Gastrocnemius medialis (tissue), 4 donors: ENCODE measurements at regions of chr19 and their contacts with region 1.

Region 1: DNA sequence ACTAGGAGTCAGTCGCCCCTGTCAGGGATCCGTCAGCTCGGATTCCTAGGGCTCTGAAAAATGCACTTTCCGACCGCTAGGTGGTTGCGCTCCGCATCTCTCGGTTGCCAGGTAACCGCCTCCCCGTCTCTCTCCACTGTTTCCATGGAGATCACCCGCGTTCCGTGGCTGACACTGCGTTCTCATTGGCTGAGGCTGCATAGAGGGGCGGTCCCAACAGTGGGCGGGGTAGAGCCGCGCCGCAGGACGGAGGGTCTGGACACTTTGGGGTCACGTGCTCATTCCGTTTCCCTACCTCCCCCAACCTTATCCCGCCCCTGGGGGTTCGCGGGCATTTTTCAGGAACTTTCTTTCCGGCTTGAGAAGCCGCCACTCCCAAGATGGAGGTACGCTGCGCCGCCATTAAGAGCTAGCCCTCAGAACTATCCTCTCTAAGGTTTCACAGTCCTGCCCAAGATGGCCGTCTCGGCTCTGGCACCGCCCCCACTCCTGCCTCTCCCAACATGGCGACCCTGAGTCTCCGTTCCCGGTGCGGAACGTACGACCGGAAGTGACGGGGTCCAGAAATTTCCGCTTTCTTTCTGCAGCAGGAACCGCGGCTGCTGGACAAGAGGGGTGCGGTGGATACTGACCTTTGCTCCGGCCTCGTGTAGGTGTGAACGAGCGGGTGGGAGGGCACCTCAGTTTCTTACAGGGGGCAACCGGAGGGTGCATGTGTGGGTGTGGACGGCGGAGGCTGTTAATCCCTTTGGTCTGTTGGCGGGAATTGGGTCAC is at the starts of genes ODAD3 and PRKCSH:
- DNase-seq: peak; percentile 97 to 98
- ATAC-seq: peak; percentile 97 to 99
- H3K4me3 ChIP-seq: peak within 1 kb of the TSS; percentile 71 to 85 (median 78)
- H3K27ac ChIP-seq: peak within 1 kb of the TSS; percentile 65 to 85 (median 76)
- H3K4me1 ChIP-seq: peaks cover 14% of the 10 kb centered on the region in 2 donors
- H3K27me3 ChIP-seq: no peaks in the 10 kb centered on the region
- CTCF ChIP-seq: peak; percentile 82 to 97 (median 93)
- POLR2A ChIP-seq: peak in 1 of 2 donors; percentile 8
- total RNA-seq, gene ODAD3: not detected
- total RNA-seq, gene PRKCSH: 31.6 to 54.2 (median 50.6) TPM

Region 2: DNA sequence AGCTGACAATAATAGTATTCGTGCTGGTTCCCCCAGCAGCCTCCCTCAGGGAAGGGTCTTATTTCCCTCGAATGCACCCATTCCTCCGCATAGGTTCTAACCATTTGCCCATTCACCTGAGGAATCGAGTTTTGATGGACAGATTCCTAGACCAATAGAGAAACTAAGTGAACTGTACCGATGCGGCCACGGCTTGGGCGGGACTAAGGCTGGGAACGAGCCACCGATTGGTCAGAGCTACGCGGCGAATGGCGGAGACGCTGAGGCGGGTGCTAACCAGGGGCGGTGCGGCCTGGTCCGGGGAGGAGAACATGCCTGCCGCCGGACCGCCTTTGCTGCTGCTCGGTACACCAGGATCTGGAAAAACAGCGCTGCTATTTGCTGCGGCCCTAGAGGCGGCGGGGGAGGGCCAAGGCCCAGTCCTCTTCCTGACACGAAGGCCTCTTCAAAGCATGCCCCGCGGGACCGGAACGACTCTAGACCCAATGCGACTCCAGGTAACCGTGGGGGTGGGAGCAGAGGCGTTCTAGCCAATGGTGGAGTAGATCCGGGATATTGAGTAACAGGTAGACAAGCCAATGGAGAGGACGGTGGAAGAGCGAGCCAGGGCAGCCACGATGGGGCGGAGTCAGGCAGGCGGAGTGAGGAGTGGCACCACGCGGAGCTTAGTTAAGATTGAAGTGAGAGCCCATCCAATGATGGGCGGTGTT is 60.7 kb before region 1 on chr19 and contains the start of gene SWSAP1:
- in situ Hi-C with region 1: loop called in 1 of 4 experiments (anchors 5 kb)
- intact Hi-C with region 1: no loop called
- DNase-seq: peak; percentile 99
- ATAC-seq: peak; percentile 97 to 98
- H3K4me3 ChIP-seq: peak within 1 kb of the TSS; percentile 73 to 84 (median 76)
- H3K27ac ChIP-seq: peak within 1 kb of the TSS; percentile 93 to 97 (median 94)
- H3K4me1 ChIP-seq: peaks cover 22 to 24% of the 10 kb centered on the region in 2 donors
- H3K27me3 ChIP-seq: no peaks in the 10 kb centered on the region
- CTCF ChIP-seq: no peak
- POLR2A ChIP-seq: peak in 1 of 2 donors; percentile 47
- total RNA-seq, gene SWSAP1: 0.51 to 1.7 (median 1.2) TPM

Region 3: DNA sequence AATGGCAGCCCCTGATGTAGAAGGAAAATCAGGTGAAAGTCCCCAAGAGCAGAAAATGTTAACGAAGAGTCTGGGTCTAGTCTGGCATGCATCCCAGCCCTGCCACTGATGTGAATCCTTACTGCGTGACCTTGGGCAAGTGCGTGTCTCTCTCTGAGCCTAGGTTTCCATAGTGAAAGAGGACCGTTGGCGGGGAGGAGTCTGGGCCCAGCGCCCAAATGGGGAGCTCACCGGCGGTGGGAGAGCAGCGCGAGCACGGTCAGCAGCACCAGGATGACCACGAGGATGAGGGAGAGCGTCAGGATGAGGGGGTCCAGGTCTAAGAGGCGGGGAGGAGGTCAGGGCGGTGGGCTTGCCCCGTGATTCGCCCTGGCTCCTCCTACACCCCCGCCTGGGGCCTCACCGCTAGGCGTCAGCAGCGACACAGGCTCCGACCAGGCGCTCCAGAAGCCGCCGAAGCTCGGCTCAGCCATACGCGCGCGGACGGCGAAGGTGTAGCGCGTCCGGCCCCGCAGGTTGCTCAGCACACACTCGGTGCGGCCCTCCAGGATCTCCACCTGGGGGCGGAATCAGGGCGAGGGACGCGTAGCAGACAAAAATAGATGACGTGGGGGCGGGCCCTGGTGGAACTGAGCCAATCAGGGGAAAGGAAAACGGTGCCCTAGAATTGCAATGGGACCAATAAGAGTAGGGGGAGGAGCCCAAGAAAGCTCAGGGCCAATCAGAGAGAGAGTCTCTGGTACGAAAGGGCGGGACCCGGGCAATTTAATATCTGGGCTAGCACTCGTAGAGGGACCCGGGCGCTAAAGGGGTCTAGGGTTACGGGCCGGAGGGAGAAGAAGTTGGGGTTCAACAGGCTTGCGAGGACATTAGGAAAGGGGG is 54.4 kb before region 1 on chr19:
- in situ Hi-C with region 1: loop called in 1 of 4 experiments (anchors 5 kb)
- intact Hi-C with region 1: loop called (anchors 1 kb)
- DNase-seq: peak; percentile 93 to 97
- ATAC-seq: peak; percentile 99 to 100
- H3K4me3 ChIP-seq: peak overlapping the region; percentile 65 to 87 (median 77)
- H3K27ac ChIP-seq: peak overlapping the region; percentile 86 to 88 (median 88)
- H3K4me1 ChIP-seq: peaks cover 23 to 25% of the 10 kb centered on the region in 2 donors
- H3K27me3 ChIP-seq: peaks cover 24 to 30% (median 29%) of the 10 kb centered on the region in 3 donors
- CTCF ChIP-seq: peak; percentile 65 to 83 (median 74)
- POLR2A ChIP-seq: peak; percentile 82 to 89

Region 4: DNA sequence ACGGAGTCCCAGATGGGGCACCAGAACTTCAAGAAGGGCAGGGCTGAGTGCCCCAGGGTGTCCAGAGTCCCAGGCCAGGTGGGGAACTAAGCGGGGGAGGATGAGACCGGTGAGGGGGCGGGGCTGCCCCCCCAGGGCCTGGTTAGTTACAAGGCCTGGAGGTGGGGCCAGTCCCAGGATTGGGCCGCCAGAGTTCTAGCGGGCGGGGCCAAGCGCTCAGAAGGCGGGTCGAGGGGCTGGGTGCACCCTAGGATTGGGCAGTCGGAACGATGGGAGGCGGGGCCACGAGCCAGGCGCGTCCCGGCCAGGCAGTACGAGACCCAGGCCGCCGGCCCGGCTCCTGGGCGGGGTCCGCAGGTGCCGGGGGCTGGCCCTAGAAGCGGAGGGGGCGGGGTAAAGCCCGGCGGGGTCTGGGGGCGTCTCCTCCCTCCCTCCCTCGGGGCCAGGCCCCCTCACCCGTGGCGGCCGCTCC is 69.8 kb after region 1 on chr19:
- in situ Hi-C with region 1: no loop called
- intact Hi-C with region 1: loop called (anchors 1 kb)
- DNase-seq: peak; percentile 95 to 97
- ATAC-seq: peak; percentile 91 to 92
- H3K4me3 ChIP-seq: peak overlapping the region; percentile 70 to 99 (median 88)
- H3K27ac ChIP-seq: peak overlapping the region; percentile 83 to 99 (median 97)
- H3K4me1 ChIP-seq: peaks cover 8 to 12% of the 10 kb centered on the region in 2 donors
- H3K27me3 ChIP-seq: no peaks in the 10 kb centered on the region
- CTCF ChIP-seq: no peak
- POLR2A ChIP-seq: no peak

Region 5: GRCh38 chr19:11528551-11529341 is 93.5 kb after region 1 on chr19 and contains the start of gene ECSIT:
- in situ Hi-C with region 1: no loop called
- intact Hi-C with region 1: loop called (anchors 2 kb)
- DNase-seq: peak; percentile 96 to 99
- ATAC-seq: peak; percentile 99 to 100
- H3K4me3 ChIP-seq: peak within 1 kb of the TSS; percentile 77 to 92 (median 83)
- H3K27ac ChIP-seq: peak within 1 kb of the TSS; percentile 89 to 93 (median 92)
- H3K4me1 ChIP-seq: peaks cover 13 to 24% of the 10 kb centered on the region in 2 donors
- H3K27me3 ChIP-seq: no peaks in the 10 kb centered on the region
- CTCF ChIP-seq: no peak
- POLR2A ChIP-seq: peak in 1 of 2 donors; percentile 36
- total RNA-seq, gene ECSIT: 82.9 to 199 (median 129) TPM

Region 6: DNA sequence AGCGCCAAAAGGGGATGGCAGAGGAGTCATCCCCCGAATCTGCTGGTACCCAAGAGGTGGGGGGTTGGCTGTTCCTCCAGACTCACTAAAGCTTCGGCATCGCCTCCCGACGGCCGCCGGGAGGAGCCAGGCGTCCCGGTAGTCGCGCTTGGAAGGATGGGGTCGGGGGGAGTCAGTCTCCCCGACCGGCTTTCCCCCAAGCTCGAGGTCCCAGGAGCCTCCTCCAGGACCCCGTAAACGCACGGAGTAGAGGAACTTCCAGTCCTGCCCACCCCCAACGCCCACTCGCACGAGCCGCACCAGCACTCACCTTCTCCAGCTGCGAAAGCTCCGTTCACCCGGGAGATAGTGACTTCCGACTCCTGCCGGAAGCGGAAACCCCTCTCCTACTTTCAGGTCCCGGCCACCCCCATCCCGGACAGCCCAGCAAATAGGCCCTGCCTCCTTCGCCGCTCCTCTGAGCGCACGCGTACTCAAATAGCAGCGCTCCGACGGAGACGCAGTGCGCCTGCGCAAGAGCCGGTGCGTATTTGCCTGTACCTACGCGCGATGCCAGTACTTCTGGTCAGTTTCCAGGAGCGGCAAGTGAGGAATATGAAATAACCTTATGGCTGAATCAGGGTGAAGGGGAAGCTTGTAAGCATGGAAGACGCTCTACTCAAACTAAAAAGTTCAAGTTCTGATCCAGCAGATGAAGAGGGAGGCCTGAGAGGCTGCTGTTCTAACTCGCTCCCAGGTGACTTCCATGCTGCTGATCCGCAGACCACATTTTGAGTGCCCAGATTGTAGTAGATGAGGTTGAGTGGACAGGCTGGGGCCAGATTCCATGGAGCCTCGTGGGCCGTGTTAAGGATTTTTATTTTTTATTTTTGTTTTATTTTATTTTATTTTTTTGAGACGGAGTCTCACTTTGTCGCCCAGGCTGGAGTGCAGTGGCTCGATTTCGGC is 123.9 kb after region 1 on chr19 and contains the start of gene ELOF1:
- in situ Hi-C with region 1: no loop called
- intact Hi-C with region 1: loop called (anchors 1 kb)
- DNase-seq: peak; percentile 97
- ATAC-seq: peak; percentile 97 to 99
- H3K4me3 ChIP-seq: peak within 1 kb of the TSS; percentile 71 to 98 (median 84)
- H3K27ac ChIP-seq: peak within 1 kb of the TSS; percentile 76 to 92 (median 86)
- H3K4me1 ChIP-seq: peaks cover 22 to 25% of the 10 kb centered on the region in 2 donors
- H3K27me3 ChIP-seq: no peaks in the 10 kb centered on the region
- CTCF ChIP-seq: peak in 2 of 5 experiments; percentile 10 to 22
- POLR2A ChIP-seq: peak; percentile 69 to 84
- total RNA-seq, gene ELOF1: 21.5 to 37.5 (median 27.2) TPM

Region 7: GRCh38 chr19:11587302-11587974 is 152.2 kb after region 1 on chr19:
- in situ Hi-C with region 1: no loop called
- intact Hi-C with region 1: no loop called
- DNase-seq: peak; percentile 41 to 56
- ATAC-seq: peak; percentile 54 to 68
- H3K4me3 ChIP-seq: no peak overlapping the region
- H3K27ac ChIP-seq: no peak overlapping the region
- H3K4me1 ChIP-seq: peaks cover 0 to 5% of the 10 kb centered on the region in 2 donors
- H3K27me3 ChIP-seq: no peaks in the 10 kb centered on the region
- CTCF ChIP-seq: peak; percentile 78 to 88 (median 83)
- POLR2A ChIP-seq: no peak

Region 8: DNA sequence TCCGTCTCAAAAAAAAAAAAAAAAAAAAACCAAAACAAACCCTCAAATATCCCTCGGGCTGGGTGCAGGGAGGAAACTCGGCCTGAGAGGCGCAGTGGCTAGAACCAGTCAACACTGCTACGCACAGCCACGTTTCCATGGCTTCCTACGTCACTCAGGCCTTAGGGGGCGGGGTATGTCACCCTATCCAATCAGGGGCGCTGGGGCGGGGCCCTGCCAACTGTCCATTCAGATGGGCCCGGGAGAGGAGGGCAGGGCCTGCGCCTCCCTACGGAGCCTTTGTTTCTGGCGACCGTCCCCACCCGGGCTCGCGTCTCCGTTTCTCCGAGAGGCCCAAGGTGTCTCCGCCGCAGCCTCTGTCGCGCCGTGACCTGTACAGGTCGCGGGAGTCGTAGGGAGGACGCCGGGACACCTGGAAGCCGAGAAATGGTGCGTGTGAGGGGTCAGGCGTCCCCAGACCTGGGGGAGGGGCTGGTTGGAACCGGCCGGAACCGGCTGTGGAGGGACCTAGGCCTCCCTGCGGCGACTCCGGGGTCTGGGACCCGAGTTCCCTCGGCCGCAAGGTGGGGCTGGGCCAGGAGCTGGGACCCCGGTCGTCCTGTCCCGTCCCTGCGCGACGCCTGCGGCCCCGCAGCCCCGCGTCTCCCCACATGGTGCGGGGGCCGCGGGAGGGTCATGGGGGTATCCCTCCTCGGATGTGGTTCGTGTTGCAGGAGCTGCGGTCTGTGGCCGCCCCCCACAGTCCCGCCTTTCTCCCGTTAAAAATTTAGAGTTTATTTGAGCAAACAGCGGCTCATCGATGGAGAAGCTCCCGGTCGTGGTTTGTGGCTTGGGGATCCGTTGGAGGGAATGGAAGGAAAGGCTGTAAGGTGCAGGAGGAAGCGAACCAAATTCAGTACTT is 162.2 kb after region 1 on chr19 and contains the start of gene ZNF627:
- in situ Hi-C with region 1: no loop called
- intact Hi-C with region 1: loop called (anchors 1 kb)
- DNase-seq: peak; percentile 97 to 99
- ATAC-seq: peak; percentile 99
- H3K4me3 ChIP-seq: peak within 1 kb of the TSS; percentile 88 to 99 (median 92)
- H3K27ac ChIP-seq: peak within 1 kb of the TSS; percentile 89 to 95 (median 91)
- H3K4me1 ChIP-seq: peaks cover 9% of the 10 kb centered on the region in 2 donors
- H3K27me3 ChIP-seq: no peaks in the 10 kb centered on the region
- CTCF ChIP-seq: peak in 4 of 5 experiments; percentile 12 to 43 (median 26)
- POLR2A ChIP-seq: peak; percentile 84 to 90
- total RNA-seq, gene ZNF627: 2.3 to 4.5 (median 3.7) TPM